ENCODE measurements at regions of chr10 and their contacts with region 1.

Region 1: GRCh38 chr10:97117372-97117771 is 68.4 kb downstream of the SLIT1 start:
- DNase-seq: peak; percentile 43
- ATAC-seq: no peak; the same call in 1 of the 2 replicates
- H3K4me3 ChIP-seq: no peak overlapping the region
- H3K27ac ChIP-seq: no peak overlapping the region
- H3K4me1 ChIP-seq: no peaks in the 10 kb centered on the region
- H3K27me3 ChIP-seq: peaks cover 24% of the 10 kb centered on the region
- CTCF ChIP-seq: peak; percentile 54

Region 2: DNA sequence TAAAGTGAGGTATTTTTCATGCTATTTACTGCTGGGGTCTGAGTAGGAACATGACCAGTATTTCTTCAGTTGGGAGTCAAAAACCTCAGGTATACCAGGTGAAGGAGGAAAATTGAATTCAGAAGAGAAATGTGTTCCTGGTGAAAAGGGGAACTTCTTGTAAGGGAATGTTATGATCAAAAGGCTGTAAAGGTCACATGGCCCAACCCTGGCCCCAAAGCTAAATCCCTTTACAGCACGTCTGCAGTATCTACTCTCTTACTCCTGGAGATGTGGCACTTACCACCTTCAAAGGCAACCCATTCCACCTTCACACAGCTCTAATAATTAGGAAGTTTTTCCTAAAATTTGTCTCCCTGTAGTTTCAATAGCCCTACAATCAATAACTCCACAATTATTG is 412.2 kb before region 1 on chr10:
- CTCF ChIA-PET with region 1: no interaction called
- POLR2A ChIA-PET with region 1: interaction called, 12 read pairs
- intact Hi-C with region 1: no loop called
- DNase-seq: no peak
- ATAC-seq: no peak
- H3K4me3 ChIP-seq: no peak overlapping the region
- H3K27ac ChIP-seq: no peak overlapping the region
- H3K4me1 ChIP-seq: no peaks in the 10 kb centered on the region
- H3K27me3 ChIP-seq: no peaks in the 10 kb centered on the region
- CTCF ChIP-seq: no peak

Region 3: DNA sequence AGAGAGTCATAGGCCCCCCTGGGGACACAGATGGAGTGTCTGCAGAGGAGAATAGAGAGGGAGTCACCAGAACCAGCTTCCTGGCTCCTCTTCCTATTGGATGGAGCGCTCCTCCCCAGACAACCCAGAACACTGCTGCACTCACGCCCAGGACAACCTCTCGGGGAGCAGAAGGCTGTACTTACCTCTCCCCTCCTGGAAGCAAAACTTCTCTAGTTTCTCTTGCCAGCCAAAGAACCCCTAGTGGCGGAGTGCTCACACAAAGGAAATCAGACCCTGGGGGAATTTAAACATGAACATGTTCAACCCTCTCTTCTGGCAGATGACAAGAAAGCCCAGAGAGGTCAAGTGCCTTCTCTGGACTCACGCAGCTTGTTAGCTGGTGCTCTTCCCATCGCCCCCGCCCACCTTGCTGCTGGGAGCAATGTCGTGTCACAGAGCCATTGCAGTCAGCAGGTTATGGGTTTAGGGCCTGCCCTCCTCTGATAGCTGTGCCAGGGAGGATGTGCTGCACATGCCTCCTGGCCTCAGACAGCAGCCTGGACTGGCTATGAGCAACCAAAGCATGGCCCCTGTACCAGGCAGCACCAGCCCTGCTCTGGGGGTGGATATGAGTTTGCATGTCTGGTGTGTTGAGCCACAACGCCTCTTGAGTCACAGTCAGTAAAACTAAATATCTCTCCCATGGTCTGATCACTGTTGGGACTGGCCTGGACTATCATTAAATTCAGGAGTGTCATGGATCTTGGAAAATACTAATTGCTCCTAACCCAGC is 16.0 kb before region 1 on chr10:
- CTCF ChIA-PET with region 1: no interaction called
- POLR2A ChIA-PET with region 1: no interaction called
- intact Hi-C with region 1: no loop called
- DNase-seq: no peak
- ATAC-seq: no peak
- H3K4me3 ChIP-seq: no peak overlapping the region
- H3K27ac ChIP-seq: no peak overlapping the region
- H3K4me1 ChIP-seq: no peaks in the 10 kb centered on the region
- H3K27me3 ChIP-seq: peaks cover 58% of the 10 kb centered on the region
- CTCF ChIP-seq: no peak

Measured in PC-3 (cell line).